ENCODE measurements at regions of chr13 and their contacts with region 1.

Region 1: DNA sequence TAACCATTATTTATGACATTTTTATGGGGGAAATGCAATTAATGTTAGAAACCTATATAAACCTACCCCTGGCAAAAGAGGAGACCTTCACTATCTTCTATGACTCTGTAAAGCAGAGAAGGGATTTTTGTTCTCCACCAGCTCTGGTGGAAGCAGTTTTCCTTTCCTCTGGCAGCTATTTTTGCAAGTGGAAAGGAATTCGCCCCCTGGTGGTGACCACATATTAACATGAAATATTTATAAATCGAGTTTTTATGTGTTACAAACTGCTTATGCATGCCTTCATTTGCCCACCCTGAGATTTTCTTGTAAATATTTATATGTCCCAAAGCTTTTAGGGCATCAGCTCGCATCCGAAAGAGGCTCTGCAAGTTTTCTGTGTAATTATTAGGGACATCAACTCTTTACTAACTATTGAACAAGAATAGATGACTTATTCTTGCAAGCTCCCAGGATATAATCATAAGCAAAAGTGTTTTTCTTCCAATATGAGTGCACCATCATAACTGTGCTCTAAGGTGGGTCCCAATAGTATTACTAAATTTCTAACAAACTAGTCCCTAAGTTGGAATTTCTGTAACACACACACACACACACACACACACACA is 62.4 kb downstream of the SERTM1 start:
- DNase-seq: peak; percentile 41
- ATAC-seq: peak in 1 of 2 donors; percentile 16

Region 2: GRCh38 chr13:35978603-35979316 is 757.5 kb before region 1 on chr13:
- intact Hi-C with region 1: loop called in 1 of 2 experiments (anchors 5 kb)
- DNase-seq: no peak
- ATAC-seq: peak; percentile 58 to 65

Region 3: DNA sequence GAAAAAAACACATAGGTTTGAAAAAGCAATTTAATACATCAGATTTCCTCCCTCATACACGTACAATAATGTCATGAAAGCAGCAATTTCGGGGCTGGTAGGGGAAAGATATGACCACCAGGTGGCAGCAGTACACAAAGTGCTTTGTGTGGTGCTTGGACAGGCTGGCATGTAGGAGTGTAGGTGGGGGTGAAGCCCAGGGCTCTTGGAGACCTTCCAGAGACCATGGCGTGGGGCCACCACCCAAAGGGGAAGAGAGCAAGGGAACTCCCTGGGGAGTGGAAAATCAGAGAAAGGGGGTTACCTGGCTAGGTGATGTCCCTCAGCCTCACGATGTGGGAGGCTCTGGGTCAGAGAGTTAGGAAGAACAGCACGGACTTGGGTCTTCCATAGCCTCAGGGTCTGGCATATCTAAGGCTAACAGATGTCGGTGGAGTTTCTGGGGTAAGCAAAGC is 315.8 kb before region 1 on chr13:
- intact Hi-C with region 1: loop called in 1 of 2 experiments (anchors 2 kb)
- DNase-seq: peak; percentile 64
- ATAC-seq: peak; percentile 77 to 85

Region 4: DNA sequence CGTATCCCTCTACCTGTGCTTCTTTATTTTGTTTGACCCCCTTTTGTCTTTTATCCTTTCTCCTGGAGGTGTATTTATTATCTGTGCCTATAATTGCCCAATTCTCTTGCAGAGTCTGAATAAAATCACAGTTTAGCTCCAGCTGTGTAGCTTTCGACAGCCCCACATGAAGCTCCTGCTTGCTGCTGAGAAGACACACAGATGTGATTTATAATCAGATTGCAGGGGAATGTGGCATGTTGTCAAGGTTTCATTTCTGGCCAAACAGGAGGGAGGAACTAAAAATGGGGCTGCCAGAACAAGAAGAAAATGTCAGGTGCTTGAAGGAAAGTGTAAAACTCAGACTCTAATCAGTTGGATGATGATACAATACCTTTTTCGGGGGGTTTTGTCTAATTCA is 281.2 kb before region 1 on chr13:
- intact Hi-C with region 1: loop called in 1 of 2 experiments (anchors 2 kb)
- DNase-seq: no peak
- ATAC-seq: no peak

Measured in left cardiac atrium (tissue), 4 donors.